Heart right ventricle (tissue), 16 donors: ENCODE measurements at regions of chr4 and their contacts with region 1.

Region 1: GRCh38 chr4:127965062-127965802 is at the starts of genes ABHD18 and MFSD8:
- DNase-seq: peak; percentile 98 to 99
- ATAC-seq: peak; percentile 97 to 99 (median 97)
- H3K4me3 ChIP-seq: peak within 1 kb of the TSS; percentile 60 to 98 (median 82)
- H3K27ac ChIP-seq: peak within 1 kb of the TSS; percentile 76 to 96 (median 93)
- H3K4me1 ChIP-seq: peaks cover 0 to 54% (median 34%) of the 10 kb centered on the region in 9 donors
- H3K27me3 ChIP-seq: no peaks in the 10 kb centered on the region
- CTCF ChIP-seq: peak in 8 of 9 donors; percentile 19 to 64 (median 44)
- total RNA-seq, gene ABHD18: 12.6 to 55.9 (median 30.4) TPM
- total RNA-seq, gene MFSD8: 6.9 to 14.3 (median 11.0) TPM

Region 2: GRCh38 chr4:128060699-128061565 is 95.7 kb after region 1 on chr4 and contains the start of gene LARP1B:
- intact Hi-C with region 1: loop called in 4 of 10 experiments (anchors 5 to 10 kb)
- DNase-seq: peak; percentile 95 to 96
- ATAC-seq: peak; percentile 96 to 98 (median 97)
- H3K4me3 ChIP-seq: peak within 1 kb of the TSS; percentile 58 to 85 (median 73)
- H3K27ac ChIP-seq: peak within 1 kb of the TSS; percentile 76 to 98 (median 94)
- H3K4me1 ChIP-seq: peaks cover 0 to 24% (median 9%) of the 10 kb centered on the region in 9 donors
- H3K27me3 ChIP-seq: no peaks in the 10 kb centered on the region
- CTCF ChIP-seq: peak in 2 of 9 donors; percentile 10 to 11
- total RNA-seq, gene LARP1B: 14.5 to 20.3 (median 18.9) TPM

Region 3: DNA sequence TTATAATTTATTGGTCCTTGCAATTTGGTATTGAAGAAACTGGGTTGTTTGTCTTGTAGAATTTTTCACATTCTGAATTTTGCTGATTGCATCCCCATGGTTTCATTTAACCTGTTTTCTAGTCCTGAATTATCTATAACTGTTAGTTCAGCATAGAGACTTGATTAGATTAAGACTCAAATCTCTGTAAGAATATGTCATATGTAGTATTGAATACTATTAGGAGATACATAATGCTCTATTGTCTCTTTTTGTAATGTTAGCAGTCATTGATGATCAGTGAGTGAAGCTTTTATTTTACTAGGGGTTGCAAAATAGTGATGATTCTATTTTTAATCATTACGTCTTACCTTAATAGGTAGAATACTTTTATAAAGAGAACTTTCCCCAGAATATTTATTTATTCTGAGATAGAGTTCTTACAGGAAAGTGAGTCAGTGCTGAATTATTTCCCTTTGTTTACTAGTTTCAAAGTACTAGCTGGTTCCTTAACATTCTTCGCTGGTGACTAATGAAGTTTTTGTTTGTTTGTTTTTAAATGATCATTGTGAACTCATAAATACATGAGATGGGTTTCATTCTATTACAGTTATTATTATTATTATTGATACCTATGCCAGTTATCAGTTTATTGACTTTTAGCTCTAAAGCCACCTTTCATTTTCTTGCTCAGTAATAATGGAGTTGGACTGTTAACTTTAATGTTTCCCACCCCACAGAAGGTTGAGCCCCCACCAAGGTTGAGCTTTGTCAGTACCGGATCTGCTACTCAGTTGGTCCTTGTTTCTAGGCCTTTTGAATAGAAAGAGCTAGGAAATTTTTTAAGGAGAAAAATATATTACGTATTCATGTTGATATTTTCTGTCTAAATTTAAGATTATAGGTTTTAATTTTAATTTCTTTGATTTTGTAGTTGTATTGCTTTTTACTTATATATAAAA is 198.2 kb after region 1 on chr4:
- intact Hi-C with region 1: no loop called
- DNase-seq: no peak
- ATAC-seq: no peak
- H3K4me3 ChIP-seq: no peak overlapping the region
- H3K27ac ChIP-seq: peak overlapping the region in 2 of 10 donors; percentile 17 to 38
- H3K4me1 ChIP-seq: peaks cover 0 to 11% (median 6%) of the 10 kb centered on the region in 9 donors
- H3K27me3 ChIP-seq: no peaks in the 10 kb centered on the region
- CTCF ChIP-seq: no peak